BJ (cell line): ENCODE measurements at regions of chr3 and their contacts with region 1.

Region 1: GRCh38 chr3:149777414-149778214 is 14.7 kb downstream of the ANKUB1 start:
- DNase-seq: no peak
- H3K4me3 ChIP-seq: no peak overlapping the region
- H3K27me3 ChIP-seq: no peaks in the 10 kb centered on the region
- CTCF ChIP-seq: no peak

Region 2: DNA sequence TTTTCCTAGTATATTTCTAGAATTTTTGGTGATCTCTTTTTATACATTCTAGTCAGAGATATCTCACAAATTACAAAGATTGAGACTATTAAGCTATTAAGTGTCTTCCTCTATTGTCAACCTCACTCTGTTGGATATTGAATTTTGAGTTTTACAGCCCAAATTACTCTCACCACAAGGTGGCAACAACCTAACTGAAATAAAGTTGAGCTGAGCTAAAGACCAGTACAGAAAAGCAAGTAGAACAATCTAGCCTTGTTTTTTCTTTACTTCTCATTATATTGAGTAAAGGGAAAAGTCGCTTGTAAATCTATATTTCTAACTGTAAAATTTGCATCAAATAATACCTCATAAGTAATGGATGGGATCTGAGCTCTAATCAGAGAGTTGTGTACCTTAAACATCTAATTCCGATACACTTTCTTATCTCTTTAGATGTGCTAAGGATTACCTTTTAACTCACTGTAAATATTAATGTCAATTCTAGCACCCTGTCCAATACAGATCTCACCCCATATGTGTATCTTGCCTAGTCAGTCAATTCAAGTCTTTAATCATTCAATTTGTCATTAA is 11.8 kb before region 1 on chr3:
- CTCF ChIA-PET with region 1: interaction called, 49 read pairs
- POLR2A ChIA-PET with region 1: no interaction called
- DNase-seq: no peak
- H3K4me3 ChIP-seq: no peak overlapping the region
- H3K27me3 ChIP-seq: peaks cover 6% of the 10 kb centered on the region
- CTCF ChIP-seq: peak; percentile 67

Region 3: GRCh38 chr3:149820180-149820579 is 42.6 kb after region 1 on chr3:
- CTCF ChIA-PET with region 1: no interaction called
- POLR2A ChIA-PET with region 1: no interaction called
- DNase-seq: no peak
- H3K4me3 ChIP-seq: no peak overlapping the region
- H3K27me3 ChIP-seq: no peaks in the 10 kb centered on the region
- CTCF ChIP-seq: no peak